ENCODE measurements at regions of chr19 and their contacts with region 1.

Region 1: DNA sequence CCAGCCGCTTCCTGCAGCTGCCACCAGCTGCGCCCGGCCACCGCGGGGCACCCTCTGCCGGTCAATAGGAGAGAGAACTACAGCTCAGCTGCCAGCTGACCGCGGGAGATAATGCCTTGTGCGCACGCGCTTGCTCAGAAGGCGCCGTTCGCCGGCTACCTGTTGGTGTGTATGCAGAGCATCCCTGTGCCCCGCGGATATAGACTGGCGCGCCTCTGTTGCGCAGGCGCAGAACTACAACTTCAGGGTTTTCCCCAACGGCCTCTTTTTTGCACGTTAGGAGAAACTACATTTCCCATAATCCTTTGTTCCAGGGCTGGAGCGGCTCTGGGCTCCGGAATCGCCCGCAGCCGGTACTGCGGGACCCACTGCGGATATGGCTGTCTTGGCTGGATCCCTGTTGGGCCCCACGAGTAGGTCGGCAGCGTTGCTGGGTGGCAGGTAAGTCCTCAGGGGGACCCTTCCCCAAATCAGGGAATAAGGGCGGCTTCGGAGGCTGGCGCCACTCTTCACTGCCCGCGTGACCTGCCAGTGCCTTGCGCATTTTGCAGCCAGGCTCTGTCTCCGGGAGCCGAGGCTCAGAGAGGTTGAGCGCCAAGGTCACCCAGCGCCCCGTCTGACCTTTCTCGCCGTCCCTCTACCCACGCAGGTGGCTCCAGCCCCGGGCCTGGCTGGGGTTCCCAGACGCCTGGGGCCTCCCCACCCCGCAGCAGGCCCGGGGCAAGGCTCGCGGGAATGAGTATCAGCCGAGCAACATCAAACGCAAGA is at the start of gene MRPL34:
- DNase-seq: peak; percentile 99
- ATAC-seq: peak; percentile 65
- H3K4me3 ChIP-seq: peak within 1 kb of the TSS; percentile 81 to 85
- H3K27ac ChIP-seq: peak within 1 kb of the TSS; percentile 92
- H3K4me1 ChIP-seq: peaks cover 40 to 66% of the 10 kb centered on the region in 2 experiments
- H3K27me3 ChIP-seq: no peaks in the 10 kb centered on the region
- CTCF ChIP-seq: peak in 2 of 3 experiments; percentile 77 to 85
- POLR2A ChIP-seq: peak; percentile 51
- RAD21 ChIP-seq: peak; percentile 93
- total RNA-seq, gene MRPL34: 114 TPM

Region 2: DNA sequence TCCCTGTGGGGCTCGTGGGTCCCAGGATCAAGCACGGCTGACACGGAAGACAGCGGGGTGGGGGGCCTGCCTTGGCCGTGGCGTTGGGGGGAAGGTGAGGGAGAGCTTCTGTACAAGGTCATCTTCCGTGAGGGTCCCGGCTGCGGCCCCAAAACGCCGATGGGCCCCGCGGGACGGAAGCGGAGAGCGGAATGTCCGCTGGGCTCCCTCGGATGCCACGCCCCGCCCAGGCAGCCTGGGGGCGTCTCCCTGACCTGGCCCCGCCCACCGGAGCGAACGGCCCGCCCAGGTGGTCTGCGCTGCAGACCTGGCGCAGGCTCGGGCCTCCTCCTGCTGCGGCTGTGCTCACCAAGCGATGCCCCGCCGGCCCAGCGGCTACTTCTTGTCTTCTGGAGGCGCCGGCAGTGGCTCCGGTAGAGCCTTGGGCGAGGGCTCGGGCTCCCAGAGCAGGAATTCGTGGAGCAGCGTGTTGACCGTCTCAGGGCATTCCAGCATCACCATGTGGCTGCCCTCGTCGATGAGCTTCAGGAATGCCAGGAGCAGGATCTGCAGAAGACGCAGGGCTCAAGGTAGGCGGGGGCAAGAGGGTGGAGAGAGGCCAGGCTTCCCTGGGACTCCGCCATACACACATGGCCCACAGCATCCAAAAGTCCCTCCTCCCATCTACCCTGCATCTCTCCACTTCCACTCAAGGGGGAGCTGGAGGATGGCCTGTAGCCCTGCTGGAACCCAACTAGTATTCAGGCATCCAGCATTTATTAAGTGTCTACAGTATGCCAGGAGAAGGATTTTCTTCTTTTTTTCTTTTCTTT is 13.2 kb before region 1 on chr19:
- CTCF ChIA-PET with region 1: interaction called, 33 read pairs
- POLR2A ChIA-PET with region 1: interaction called, 22 read pairs
- RAD21 ChIA-PET with region 1: interaction called, 3 to 7 read pairs
- intact Hi-C with region 1: loop called (anchors 2 kb)
- DNase-seq: peak; percentile 86
- ATAC-seq: peak; percentile 85
- H3K4me3 ChIP-seq: peak overlapping the region; percentile 60 to 67
- H3K27ac ChIP-seq: peak overlapping the region; percentile 95
- H3K4me1 ChIP-seq: peaks cover 20 to 52% of the 10 kb centered on the region in 2 experiments
- H3K27me3 ChIP-seq: no peaks in the 10 kb centered on the region
- CTCF ChIP-seq: peak; percentile 65 to 88 (median 78)
- POLR2A ChIP-seq: peak; percentile 83
- RAD21 ChIP-seq: peak; percentile 94

Region 3: GRCh38 chr19:17322854-17323253 is 17.2 kb after region 1 on chr19:
- CTCF ChIA-PET with region 1: interaction called, 5 read pairs
- POLR2A ChIA-PET with region 1: interaction called, 11 read pairs
- RAD21 ChIA-PET with region 1: no interaction called
- intact Hi-C with region 1: no loop called
- DNase-seq: no peak
- ATAC-seq: no peak
- H3K4me3 ChIP-seq: no peak overlapping the region
- H3K27ac ChIP-seq: no peak overlapping the region
- H3K4me1 ChIP-seq: peaks cover 9 to 13% of the 10 kb centered on the region in 2 experiments
- H3K27me3 ChIP-seq: no peaks in the 10 kb centered on the region
- CTCF ChIP-seq: no peak
- POLR2A ChIP-seq: no peak
- RAD21 ChIP-seq: no peak

Region 4: DNA sequence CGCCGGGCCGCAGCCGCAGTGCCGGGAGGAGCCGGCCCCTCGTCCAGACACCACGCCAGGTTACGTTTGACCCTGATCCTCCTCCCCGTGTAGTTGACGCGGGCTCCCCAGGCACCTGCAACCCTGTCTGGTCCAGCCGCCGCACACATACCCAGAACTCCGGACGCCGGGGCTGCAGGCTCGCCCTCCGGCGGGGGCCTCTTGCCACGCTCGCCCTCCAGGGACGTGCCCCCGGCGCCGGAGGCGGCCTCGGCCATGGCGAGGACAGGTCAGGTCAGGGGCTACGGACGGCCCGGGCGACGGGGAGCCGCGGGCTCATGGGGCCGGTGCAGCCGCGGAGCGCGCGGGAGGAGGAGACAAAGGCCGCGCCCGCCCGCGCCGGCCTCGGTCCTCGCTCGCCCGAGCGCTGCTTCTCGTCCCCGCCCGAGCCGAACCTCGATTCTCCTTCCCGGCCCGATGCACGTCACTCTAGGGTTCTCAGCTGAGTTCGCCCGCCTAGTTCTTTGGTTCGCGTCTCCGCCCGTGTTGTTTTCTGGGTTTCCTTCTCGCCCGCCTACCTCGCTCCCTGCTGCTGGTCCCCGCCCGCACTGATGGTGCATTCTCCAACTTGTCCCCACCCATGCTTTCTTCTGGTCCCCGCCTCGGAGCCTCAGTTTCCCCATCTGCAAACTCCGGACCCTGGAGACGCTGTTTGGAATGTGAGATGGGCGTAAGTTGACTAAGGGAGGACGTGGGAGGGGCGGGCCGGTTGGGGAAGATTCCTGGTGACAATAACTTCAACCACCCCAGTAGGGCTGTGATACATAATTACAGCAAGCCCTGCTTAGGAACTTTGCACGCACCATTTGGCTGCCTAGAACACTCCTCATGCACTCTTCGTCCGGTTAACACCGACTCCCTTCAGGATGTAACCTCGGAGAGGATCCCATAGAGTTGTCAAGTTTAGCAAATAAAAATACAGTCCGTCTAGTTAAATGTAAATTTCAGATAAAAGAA is 29.0 kb after region 1 on chr19 and contains the start of gene ANO8:
- CTCF ChIA-PET with region 1: interaction called, 8 read pairs
- POLR2A ChIA-PET with region 1: interaction called, 39 read pairs
- RAD21 ChIA-PET with region 1: interaction called, 3 to 5 read pairs
- intact Hi-C with region 1: no loop called
- DNase-seq: peak; percentile 99
- ATAC-seq: peak; percentile 55
- H3K4me3 ChIP-seq: peak within 1 kb of the TSS; percentile 72 to 99
- H3K27ac ChIP-seq: peak within 1 kb of the TSS; percentile 93
- H3K4me1 ChIP-seq: peaks cover 32 to 53% of the 10 kb centered on the region in 2 experiments
- H3K27me3 ChIP-seq: no peaks in the 10 kb centered on the region
- CTCF ChIP-seq: no peak
- POLR2A ChIP-seq: peak; percentile 21
- RAD21 ChIP-seq: no peak
- total RNA-seq, gene ANO8: 22.9 TPM

Region 5: GRCh38 chr19:17358395-17358794 is 52.7 kb after region 1 on chr19:
- CTCF ChIA-PET with region 1: no interaction called
- POLR2A ChIA-PET with region 1: no interaction called
- RAD21 ChIA-PET with region 1: no interaction called
- intact Hi-C with region 1: no loop called
- DNase-seq: peak; percentile 37
- ATAC-seq: peak; percentile 91
- H3K4me3 ChIP-seq: no peak overlapping the region
- H3K27ac ChIP-seq: no peak overlapping the region
- H3K4me1 ChIP-seq: peaks cover 6 to 10% of the 10 kb centered on the region in 2 experiments; a peak in 3 of 4 replicates
- H3K27me3 ChIP-seq: no peaks in the 10 kb centered on the region
- CTCF ChIP-seq: no peak
- POLR2A ChIP-seq: no peak
- RAD21 ChIP-seq: no peak

Measured in HCT116 (cell line).